Mucosa of descending colon (tissue), 3 donors: ENCODE measurements at regions of chr5 and their contacts with region 1.

Region 1: GRCh38 chr5:114449860-114450421 is 88.1 kb downstream of the KCNN2 start:
- DNase-seq: peak in 2 of 3 donors; percentile 74 to 76
- ATAC-seq: peak; percentile 88
- H3K4me3 ChIP-seq: no peak overlapping the region
- H3K4me1 ChIP-seq: no peaks in the 10 kb centered on the region
- CTCF ChIP-seq: peak; percentile 27

Region 2: DNA sequence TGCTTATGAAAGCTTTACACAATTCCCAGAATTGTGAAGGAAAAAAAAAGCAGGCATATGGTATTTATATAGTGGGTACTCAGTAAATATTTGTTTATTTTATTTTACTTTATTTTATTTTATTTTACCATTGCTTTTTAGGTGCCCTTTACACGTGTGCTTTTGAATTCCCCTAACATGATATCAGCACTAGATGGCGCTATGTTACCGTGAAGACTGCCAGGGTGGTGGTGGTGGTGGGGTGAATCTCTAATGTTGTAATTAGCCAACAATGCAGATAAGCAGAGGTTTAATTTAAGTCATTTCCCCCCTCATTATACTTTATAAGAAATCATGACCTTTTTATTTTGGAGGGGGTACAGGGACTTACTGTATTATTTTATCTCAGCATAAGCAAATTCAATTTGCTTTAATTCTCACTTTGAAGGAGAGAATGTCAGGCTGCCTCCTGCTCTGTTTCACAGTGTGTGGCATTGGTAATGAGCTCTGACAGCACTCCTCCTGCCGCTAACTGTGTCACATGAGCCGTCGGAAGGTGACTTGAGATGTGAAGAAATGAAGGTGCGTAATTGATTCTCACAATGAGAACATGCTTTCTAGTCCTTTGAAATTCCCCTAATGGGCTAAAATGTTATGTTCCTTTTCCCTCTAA is 770.9 kb before region 1 on chr5:
- intact Hi-C with region 1: loop called (anchors 5 to 10 kb)
- DNase-seq: peak in 1 of 3 donors; percentile 41
- ATAC-seq: peak; percentile 42
- H3K4me3 ChIP-seq: no peak overlapping the region
- H3K4me1 ChIP-seq: no peaks in the 10 kb centered on the region
- CTCF ChIP-seq: peak; percentile 36

Region 3: GRCh38 chr5:113922343-113922742 is 527.6 kb before region 1 on chr5:
- intact Hi-C with region 1: no loop called
- DNase-seq: no peak
- ATAC-seq: peak; percentile 41
- H3K4me3 ChIP-seq: no peak overlapping the region
- H3K4me1 ChIP-seq: no peaks in the 10 kb centered on the region
- CTCF ChIP-seq: no peak

Region 4: DNA sequence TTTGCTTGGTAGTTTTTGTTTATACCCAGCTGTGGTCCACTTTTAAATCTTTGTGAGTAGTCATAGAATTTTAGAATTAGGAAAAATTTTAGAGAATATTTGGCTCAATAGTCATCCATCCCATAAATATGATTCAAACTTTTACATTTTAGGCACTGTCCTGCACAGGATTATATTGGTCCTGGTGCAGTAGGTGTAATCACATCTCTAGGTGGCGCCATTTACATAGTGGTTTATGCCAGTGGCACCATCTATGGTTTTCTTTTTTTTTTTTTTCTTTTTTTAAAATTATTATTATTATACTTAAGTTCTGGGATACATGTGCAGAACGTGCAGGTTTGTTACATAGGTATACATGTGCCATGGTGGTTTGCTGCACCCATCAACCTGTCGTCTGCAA is 348.8 kb before region 1 on chr5:
- intact Hi-C with region 1: loop called in 1 of 2 experiments (anchors 10 kb)
- DNase-seq: peak in 1 of 3 donors; percentile 62
- ATAC-seq: no peak
- H3K4me3 ChIP-seq: no peak overlapping the region
- H3K4me1 ChIP-seq: no peaks in the 10 kb centered on the region
- CTCF ChIP-seq: peak; percentile 8